ENCODE measurements at regions of chr6 and their contacts with region 1.

Region 1: DNA sequence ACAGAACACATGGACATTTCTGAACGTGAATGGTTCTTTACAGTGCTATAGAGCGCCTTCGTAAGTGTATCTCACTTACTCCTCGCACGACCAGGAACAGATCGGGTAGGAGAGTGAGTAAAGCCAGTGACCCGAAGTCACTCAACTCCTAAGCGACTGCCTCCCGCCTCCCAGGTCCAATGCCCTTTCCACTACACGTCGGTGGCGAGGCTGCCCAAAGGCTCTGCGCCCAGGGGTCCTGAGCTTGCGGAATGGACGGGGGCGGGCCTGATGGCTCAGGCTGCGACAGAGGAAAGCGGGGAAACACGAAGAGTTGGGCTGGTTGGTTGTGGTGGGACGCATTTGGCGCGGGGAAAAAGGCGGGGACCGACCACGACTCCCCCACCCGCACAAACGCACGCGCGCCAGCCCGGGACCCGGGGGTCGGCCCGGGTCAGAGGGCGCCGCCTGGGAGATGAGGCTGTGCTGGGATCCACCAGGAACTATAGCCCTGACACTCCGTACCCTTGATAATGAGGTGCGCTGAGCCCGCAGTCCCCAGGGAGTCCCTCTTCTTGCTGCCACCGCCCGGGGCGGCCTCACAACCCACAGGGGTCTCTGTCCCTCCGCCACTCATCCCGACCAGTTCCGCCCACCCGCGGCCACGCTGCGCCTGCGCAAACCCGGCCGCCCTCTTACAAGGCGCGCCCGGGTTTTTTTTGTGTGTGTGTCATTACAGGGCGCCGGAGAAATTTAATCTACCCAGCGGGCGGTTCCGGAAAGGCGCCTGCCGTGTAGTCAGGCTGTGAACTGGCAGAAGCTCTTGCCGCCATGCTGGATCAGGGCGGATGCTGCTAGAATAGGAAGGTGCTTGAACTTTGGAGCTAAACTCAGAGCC is at the start of gene BLOC1S5:
- DNase-seq: peak; percentile 98
- H3K4me3 Mint-ChIP-seq: peak within 1 kb of the TSS; percentile 90
- H3K27ac Mint-ChIP-seq: peak within 1 kb of the TSS; percentile 92
- H3K4me1 Mint-ChIP-seq: peaks cover 21% of the 10 kb centered on the region
- H3K27me3 Mint-ChIP-seq: no peaks in the 10 kb centered on the region
- total RNA-seq, gene BLOC1S5: 20.8 to 22.2 TPM

Region 2: DNA sequence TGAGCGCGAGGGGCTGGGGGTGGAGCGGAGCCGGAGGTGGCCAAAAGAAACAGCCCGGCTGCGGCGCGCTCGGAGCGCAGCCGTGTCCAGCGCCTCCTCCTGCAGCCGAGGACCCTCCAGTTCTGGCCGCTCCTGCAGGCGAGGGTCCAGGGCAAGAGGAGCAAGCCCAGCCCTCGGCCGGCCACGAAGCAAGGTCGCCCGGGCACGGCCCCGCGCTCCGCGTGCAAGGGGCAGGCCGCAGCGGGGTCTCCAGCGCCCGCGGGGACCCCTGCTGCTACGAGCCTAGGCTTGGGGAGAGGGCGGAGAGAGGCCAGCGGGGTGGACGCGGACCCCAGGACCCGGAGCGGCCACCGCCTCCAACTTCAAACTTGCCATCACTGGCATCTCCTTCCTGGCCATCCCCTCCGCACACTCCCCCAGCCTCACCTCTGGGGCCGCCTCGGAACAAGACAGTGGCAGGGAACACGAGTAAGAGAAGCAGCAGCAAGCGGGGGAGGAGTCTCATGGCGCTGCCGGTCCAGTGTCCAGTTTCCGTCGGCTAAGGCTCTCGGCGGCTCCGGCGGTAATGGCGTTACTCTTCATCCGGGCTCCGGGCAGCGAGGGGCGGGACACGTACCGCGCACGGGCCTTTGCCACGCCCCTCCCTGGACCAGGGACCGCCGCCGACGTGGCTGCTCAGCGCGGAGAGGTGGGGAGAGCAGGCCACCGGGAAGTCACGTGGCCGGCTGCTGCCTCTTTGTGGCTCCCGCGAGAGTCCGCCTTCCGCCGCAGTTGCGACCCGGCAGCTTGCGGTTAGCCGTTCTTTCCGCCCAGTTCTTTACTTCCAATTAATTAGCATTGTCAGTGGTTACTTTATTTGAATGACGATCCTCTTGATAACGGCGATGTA is 751.1 kb before region 1 on chr6 and contains the start of gene SSR1:
- CTCF ChIA-PET with region 1: no interaction called
- intact Hi-C with region 1: loop called (anchors 1 kb)
- DNase-seq: peak; percentile 96
- H3K4me3 Mint-ChIP-seq: peak within 1 kb of the TSS; percentile 92
- H3K27ac Mint-ChIP-seq: peak within 1 kb of the TSS; percentile 94
- H3K4me1 Mint-ChIP-seq: peaks cover 40% of the 10 kb centered on the region
- H3K27me3 Mint-ChIP-seq: no peaks in the 10 kb centered on the region
- total RNA-seq, gene SSR1: 116 to 121 TPM

Region 3: GRCh38 chr6:7615611-7616383 is 448.2 kb before region 1 on chr6:
- CTCF ChIA-PET with region 1: no interaction called
- intact Hi-C with region 1: loop called (anchors 2 kb)
- DNase-seq: peak; percentile 58
- H3K4me3 Mint-ChIP-seq: no peak overlapping the region
- H3K27ac Mint-ChIP-seq: no peak overlapping the region
- H3K4me1 Mint-ChIP-seq: peaks cover 14% of the 10 kb centered on the region
- H3K27me3 Mint-ChIP-seq: no peaks in the 10 kb centered on the region

Region 4: DNA sequence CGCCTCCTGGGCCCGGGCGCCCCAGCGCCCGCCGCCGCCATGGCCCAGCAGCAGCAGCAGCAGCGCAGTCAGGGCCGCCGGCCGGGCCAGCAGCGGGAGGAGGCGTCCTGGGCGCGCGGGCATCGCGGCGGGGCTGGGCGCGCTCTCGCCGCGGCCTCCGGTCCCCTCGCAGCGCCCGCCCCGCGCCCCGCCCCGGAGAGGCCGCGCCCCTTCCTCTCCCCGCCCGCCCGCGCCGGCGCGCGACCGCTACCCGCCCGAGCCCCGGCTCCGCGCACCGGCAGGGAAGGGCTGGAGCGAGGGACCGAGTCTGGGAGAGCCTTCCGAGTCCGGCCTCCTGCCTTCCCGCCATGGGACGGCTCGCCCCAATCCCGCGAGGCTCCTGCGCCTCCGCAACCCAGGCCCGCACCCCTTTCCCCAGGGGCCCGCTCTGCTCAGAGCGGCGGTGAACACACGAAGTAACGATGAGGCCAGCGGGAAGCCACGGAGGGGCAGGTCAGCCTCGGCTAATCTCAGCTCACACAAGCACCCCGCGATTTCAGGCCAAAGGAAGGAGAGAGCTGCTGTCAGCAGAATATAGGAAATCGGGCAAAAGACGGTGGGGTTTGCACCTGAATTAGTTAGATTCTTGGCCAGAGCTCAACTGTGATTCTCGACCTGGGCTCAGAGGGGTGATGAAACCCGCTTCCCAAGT is 153.2 kb before region 1 on chr6 and contains the start of gene TXNDC5:
- CTCF ChIA-PET with region 1: interaction called, 3 read pairs
- intact Hi-C with region 1: loop called (anchors 1 kb)
- DNase-seq: peak; percentile 71
- H3K4me3 Mint-ChIP-seq: peak within 1 kb of the TSS; percentile 81
- H3K27ac Mint-ChIP-seq: peak within 1 kb of the TSS; percentile 38
- H3K4me1 Mint-ChIP-seq: peaks cover 14% of the 10 kb centered on the region
- H3K27me3 Mint-ChIP-seq: no peaks in the 10 kb centered on the region
- total RNA-seq, gene TXNDC5: 60.7 to 62.2 TPM

Region 5: DNA sequence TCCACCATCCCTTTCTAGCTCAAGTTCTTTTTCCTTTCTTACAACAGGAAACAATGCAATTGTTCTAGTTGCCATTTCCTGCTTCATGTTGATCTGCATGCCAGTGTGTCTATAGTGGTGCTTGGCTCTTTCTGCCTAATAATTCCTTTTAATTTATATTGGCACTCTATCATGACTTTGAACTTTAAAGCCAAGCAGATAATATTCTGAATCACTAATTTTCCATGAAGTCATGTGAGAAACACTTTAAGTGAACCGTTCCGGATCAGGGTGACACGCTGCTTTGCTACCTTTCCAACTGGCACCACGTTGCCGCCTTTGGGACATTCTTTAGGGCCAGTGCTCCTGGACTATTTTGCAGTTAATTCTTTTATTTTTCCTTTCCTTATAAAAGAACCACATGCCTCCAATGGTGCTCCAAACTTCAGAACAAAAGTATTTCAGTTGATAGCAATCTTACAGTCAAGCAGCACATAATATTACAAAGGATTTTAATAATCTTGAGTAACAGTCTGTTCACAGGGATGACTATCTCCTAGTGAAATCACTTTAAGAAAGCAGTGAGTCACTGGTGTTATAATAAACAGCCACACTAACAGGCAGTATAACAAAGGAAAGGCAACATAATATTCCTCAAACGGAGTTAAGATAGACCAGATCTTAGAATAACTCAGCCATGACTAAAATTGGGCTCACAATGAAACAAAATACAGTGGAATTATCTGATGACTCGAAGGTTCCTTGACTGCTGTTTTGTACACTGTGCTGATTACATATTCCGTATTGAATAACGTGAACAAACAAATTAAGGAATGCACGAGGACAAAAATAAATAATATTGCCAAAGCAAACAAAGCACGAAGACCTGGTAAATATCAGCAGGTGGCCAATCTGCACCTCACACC is 19.2 kb after region 1 on chr6:
- CTCF ChIA-PET with region 1: interaction called, 3 read pairs
- intact Hi-C with region 1: loop called (anchors 1 kb)
- DNase-seq: no peak
- H3K4me3 Mint-ChIP-seq: no peak overlapping the region
- H3K27ac Mint-ChIP-seq: peak overlapping the region; percentile 59
- H3K4me1 Mint-ChIP-seq: peaks cover 30% of the 10 kb centered on the region
- H3K27me3 Mint-ChIP-seq: no peaks in the 10 kb centered on the region

Region 6: GRCh38 chr6:8219352-8219943 is 155.4 kb after region 1 on chr6:
- CTCF ChIA-PET with region 1: interaction called, 6 read pairs
- intact Hi-C with region 1: loop called (anchors 2 kb)
- DNase-seq: peak; percentile 66
- H3K4me3 Mint-ChIP-seq: no peak overlapping the region
- H3K27ac Mint-ChIP-seq: no peak overlapping the region
- H3K4me1 Mint-ChIP-seq: no peaks in the 10 kb centered on the region
- H3K27me3 Mint-ChIP-seq: peaks cover 6% of the 10 kb centered on the region

Region 7: GRCh38 chr6:8703059-8703458 is 639.1 kb after region 1 on chr6:
- CTCF ChIA-PET with region 1: no interaction called
- intact Hi-C with region 1: no loop called
- DNase-seq: no peak
- H3K4me3 Mint-ChIP-seq: no peak overlapping the region
- H3K27ac Mint-ChIP-seq: no peak overlapping the region
- H3K4me1 Mint-ChIP-seq: no peaks in the 10 kb centered on the region
- H3K27me3 Mint-ChIP-seq: no peaks in the 10 kb centered on the region

Measured in activated naive CD4-positive, alpha-beta T cell treated with anti-CD3 and anti-CD28 coated beads for 36 hours (primary cell).